Pancreas (tissue), 10 donors: ENCODE measurements at regions of chr6 and their contacts with region 1.

Region 1: GRCh38 chr6:138765896-138766655 is 7.5 kb upstream of the CCDC28A start:
- DNase-seq: no peak
- ATAC-seq: peak in 3 of 4 donors; percentile 54 to 81 (median 72)
- H3K4me3 ChIP-seq: no peak overlapping the region
- H3K27ac ChIP-seq: no peak overlapping the region
- H3K4me1 ChIP-seq: no peaks in the 10 kb centered on the region
- H3K27me3 ChIP-seq: no peaks in the 10 kb centered on the region
- CTCF ChIP-seq: peak; percentile 18 to 57 (median 48)

Region 2: DNA sequence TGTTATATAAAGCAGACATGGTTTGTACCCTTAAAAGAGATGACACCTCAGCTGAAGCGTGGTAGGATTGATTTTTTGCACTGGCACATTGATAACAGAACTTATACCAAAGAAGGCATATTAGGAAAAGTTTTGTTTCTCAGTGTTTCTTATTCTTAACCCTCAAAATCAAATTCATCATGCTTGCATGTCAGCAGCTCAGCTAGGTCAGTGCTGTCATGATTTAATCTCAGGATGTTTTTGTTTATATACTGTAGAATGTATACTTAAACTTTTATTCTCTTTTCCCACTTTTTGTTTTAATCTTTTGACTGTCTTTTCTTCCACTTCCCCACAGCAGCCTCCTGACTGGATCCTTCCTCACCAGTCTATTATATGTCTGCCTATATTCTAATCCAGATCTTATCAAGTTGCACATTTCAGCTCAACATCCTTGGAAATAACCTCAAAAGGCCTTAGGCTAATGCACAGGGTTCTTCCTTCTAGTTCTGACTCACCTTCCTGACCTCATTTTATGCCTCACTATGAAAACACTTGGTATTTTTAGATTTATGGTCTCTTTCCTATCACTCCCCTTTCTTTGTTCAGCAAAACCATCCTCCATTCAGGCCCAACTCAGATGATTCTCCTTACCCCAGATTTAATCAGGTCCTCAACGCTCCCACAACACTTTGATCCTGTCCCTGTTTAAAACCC is 355.0 kb before region 1 on chr6:
- intact Hi-C with region 1: loop called in 1 of 3 experiments (anchors 10 kb)
- DNase-seq: no peak
- ATAC-seq: no peak
- H3K4me3 ChIP-seq: no peak overlapping the region
- H3K27ac ChIP-seq: no peak overlapping the region
- H3K4me1 ChIP-seq: peaks cover 0 to 5% (median 0%) of the 10 kb centered on the region in 3 donors
- H3K27me3 ChIP-seq: no peaks in the 10 kb centered on the region
- CTCF ChIP-seq: no peak

Region 3: GRCh38 chr6:138499303-138500018 is 266.6 kb before region 1 on chr6 and contains the start of gene NHSL1:
- intact Hi-C with region 1: no loop called
- DNase-seq: peak in 1 of 6 donors; percentile 23
- ATAC-seq: peak; percentile 53 to 70 (median 66)
- H3K4me3 ChIP-seq: peak within 1 kb of the TSS in 2 of 4 donors; percentile 4 to 33
- H3K27ac ChIP-seq: peak within 1 kb of the TSS; percentile 6 to 80 (median 52)
- H3K4me1 ChIP-seq: peaks cover 15 to 56% (median 51%) of the 10 kb centered on the region in 3 donors
- H3K27me3 ChIP-seq: no peaks in the 10 kb centered on the region
- CTCF ChIP-seq: no peak
- total RNA-seq, gene NHSL1: 4.8 to 16.3 (median 11.8) TPM

Region 4: GRCh38 chr6:138590796-138591709 is 175.0 kb before region 1 on chr6:
- intact Hi-C with region 1: loop called in 2 of 3 experiments (anchors 5 kb)
- DNase-seq: peak in 4 of 6 donors; percentile 47 to 73 (median 48)
- ATAC-seq: peak; percentile 65 to 86 (median 76)
- H3K4me3 ChIP-seq: no peak overlapping the region
- H3K27ac ChIP-seq: no peak overlapping the region
- H3K4me1 ChIP-seq: no peaks in the 10 kb centered on the region
- H3K27me3 ChIP-seq: no peaks in the 10 kb centered on the region
- CTCF ChIP-seq: peak; percentile 52 to 85 (median 78)

Region 5: DNA sequence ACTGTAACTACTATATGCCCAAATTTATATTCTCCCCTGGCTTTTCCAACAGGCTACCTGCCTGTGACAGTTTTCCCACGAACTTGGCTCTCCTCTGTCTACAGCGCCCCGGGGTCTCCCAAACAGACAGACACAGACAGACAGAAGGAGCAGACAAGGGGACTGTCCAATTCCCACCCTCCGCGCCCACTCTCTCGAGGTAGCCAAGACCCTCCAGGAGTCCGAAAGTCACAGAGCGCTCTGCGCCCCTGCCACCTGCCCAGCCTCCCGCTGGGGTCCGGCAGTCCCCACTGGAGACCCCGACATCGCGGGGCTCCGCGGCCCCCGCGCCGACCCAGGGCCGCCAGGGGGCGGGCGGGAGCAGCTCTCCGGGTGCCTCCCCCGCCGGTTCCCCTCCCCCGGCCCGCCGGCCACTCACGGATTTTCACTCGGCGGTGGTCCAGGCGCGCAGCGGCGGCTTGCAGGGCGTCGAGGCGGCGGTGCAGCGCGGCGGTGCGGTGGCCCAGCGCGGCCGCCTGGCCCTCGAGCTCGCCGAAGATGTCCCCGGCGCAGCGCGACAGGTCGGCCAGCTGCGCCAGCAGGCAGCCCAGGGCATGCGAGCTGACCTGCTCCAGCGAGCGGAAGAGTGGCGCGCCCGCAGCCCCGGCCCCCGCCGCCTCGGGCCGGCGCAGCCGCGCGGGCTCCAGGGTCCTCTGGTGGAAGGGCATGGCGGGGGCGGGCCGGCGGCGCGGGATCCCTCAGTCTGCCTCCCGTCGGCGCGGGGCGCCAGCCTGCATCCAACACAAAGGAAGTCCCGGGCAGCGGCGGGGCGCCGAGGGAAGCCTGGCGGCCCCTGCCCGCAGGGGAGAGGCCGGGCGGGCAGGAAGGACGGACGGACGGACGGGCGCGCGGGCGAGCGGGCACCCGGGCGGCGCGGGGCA is 73.8 kb before region 1 on chr6:
- intact Hi-C with region 1: loop called in 2 of 3 experiments (anchors 10 kb)
- DNase-seq: peak; percentile 65 to 92 (median 75)
- ATAC-seq: peak; percentile 75 to 88 (median 83)
- H3K4me3 ChIP-seq: peak overlapping the region; percentile 75 to 95 (median 87)
- H3K27ac ChIP-seq: peak overlapping the region; percentile 55 to 83 (median 78)
- H3K4me1 ChIP-seq: peaks cover 0 to 4% (median 0%) of the 10 kb centered on the region in 3 donors
- H3K27me3 ChIP-seq: no peaks in the 10 kb centered on the region
- CTCF ChIP-seq: peak; percentile 84 to 94 (median 88)

Region 6: GRCh38 chr6:138931660-138932059 is 165.6 kb after region 1 on chr6:
- intact Hi-C with region 1: no loop called
- DNase-seq: no peak
- ATAC-seq: no peak
- H3K4me3 ChIP-seq: no peak overlapping the region
- H3K27ac ChIP-seq: no peak overlapping the region
- H3K4me1 ChIP-seq: no peaks in the 10 kb centered on the region
- H3K27me3 ChIP-seq: no peaks in the 10 kb centered on the region
- CTCF ChIP-seq: no peak